ENCODE measurements at regions of chrX and their contacts with region 1.

Region 1: DNA sequence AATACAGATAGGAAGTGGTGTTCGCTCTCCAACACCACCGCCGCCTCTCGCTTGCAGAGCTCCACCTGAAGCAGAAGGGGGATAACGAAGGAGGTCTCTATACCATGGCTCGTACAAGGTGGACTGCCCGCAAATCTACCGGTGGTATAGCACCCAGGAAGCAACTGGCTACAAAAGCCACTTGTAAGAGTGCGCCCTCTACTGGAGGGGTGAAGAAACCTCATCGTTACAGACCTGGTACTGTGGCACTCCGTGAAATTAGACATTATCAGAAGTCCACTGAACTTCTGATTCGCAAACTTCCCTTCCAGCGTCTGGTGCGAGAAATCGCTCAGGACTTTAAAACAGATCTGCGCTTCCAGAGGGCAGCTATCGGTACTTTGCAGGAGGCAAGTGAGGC is 5.2 kb upstream of the BMP15 start:
- DNase-seq: no peak
- ATAC-seq: no peak

Region 2: GRCh38 chrX:50691820-50692219 is 213.5 kb before region 1 on chrX:
- intact Hi-C with region 1: loop called (anchors 5 kb)
- DNase-seq: no peak
- ATAC-seq: no peak

Region 3: GRCh38 chrX:50747471-50747900 is 157.8 kb before region 1 on chrX:
- intact Hi-C with region 1: loop called (anchors 2 kb)
- DNase-seq: no peak
- ATAC-seq: no peak

Region 4: DNA sequence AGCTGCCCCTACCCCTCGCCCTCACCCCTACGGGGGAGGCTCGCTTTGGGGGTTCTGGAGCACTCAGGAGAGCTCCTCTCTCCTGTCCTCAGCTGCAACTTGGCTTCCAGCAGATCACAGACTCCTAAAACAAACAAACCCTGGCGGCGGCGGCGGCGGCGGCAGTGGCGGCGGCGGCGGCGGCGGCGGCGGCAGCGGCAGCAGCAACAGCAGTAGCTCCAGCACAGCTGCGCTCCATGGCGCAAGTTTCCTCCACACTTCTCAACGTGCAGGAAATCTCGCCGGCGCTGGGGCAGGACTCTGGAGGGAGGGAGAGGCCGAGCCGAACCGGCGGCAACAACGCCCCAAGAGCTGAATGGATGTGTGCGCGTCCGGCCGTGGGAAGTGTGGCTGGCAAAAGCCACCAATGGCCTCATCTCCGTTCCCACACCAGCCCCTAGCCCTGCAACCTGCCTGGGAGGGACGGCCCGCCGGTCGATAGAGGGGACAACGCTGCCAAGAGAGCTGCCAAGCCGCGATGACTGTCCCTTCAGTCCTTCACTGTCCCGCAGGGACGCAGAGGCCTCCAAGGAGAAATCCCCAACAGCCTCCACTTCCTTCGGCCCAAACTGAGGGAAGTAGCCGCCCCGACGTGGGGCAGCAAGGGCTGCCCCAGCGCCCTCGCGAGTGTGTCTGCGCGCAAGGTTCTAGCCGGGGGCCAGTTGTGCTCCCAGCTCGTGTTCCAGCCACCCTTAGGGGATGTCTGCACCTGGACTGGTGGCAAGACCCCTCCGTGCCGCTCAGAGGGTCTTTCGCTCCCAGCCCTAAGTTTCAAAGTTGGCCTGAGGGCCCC is 92.1 kb before region 1 on chrX:
- intact Hi-C with region 1: loop called (anchors 10 kb)
- DNase-seq: peak; percentile 69
- ATAC-seq: peak; percentile 75

Region 5: DNA sequence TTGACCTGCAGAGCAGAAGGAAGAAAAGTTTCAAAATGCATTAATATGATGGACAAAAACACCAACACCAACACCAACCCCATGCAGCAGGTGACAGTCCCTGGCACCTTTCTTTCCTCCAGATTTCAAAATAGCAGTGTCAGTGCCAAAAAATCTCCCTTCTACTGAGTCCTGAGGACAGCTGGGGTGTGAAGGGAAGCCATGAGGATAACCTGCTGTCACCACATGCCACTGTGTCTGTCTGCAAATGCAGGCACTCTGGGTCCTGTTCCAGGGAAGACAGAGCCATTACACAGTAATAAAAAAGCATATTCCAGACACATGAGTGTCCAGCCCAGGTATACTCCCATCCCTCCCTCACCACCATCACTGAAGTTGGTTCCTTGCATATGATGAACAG is 192.7 kb after region 1 on chrX:
- intact Hi-C with region 1: no loop called
- DNase-seq: no peak
- ATAC-seq: no peak

Region 6: GRCh38 chrX:51169410-51169809 is 264.1 kb after region 1 on chrX:
- intact Hi-C with region 1: no loop called
- DNase-seq: no peak
- ATAC-seq: no peak

Measured in Right ventricle myocardium inferior (tissue), 1 donor.